Cardiac septum (tissue), 1 donor: ENCODE measurements at regions of chr5 and their contacts with region 1.

Region 1: GRCh38 chr5:79743846-79744605 is 54.4 kb downstream of the CMYA5 start:
- DNase-seq: peak; percentile 79

Region 2: DNA sequence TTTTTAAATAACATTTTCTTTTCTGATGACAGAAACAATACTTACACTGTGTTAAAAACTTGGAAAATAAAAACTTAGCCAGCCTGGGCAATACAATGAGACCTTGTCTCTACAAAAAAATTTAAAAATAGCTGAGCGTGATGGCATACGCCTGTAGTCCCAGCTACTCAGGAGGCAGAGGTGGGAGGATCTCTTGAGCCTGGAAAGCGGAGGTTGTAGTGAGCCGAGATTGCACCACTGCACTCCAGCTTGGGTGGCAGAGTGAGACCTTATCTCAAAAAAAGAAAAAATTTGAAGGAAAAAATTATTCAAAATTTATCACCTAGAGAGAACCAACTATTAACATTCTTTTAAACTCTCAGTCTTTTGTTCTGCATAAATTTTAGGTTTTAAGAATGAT is 59.2 kb before region 1 on chr5:
- intact Hi-C with region 1: no loop called
- DNase-seq: no peak

Region 3: DNA sequence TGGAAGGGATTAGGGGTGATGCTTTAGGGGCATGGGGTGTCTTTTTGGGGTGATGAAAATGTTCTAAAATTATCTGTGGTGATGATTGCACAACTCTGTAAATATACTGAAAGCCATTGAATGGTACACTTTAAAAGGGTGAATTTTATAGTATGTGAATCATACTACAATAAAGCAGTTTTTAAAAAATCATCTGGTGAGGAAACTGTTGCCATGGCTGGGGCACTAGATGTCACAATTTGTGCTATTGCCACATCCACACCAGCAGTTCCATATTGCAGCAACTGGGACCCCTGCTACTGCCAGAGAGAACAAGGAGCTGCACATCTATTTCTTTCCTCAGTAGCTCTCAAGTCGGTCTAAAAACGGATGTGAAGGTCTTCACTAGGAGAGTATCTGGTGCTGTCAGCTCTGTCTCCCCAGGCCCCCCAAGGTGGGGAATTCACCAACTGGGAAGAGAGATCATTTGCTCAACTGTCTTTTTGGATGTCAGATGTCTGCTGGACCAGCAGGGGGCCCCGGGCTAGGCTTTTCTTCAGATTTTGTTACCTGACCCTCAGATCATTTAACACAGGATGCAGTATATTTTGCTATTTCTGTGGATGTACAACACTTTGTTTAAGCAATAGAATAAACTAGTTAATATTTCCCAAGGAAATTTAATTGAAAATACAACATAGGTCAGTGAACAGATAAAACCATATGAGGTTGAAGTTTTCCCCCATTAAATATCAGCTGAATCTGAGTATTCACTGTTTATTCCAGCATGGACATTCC is 41.2 kb before region 1 on chr5:
- intact Hi-C with region 1: loop called (anchors 5 kb)
- DNase-seq: no peak

Region 4: GRCh38 chr5:80034962-80035821 is 291.2 kb after region 1 on chr5 and contains the start of gene THBS4:
- intact Hi-C with region 1: no loop called
- DNase-seq: no peak
- total RNA-seq, gene THBS4: 464 TPM